Adrenal gland (tissue), 19 donors: ENCODE measurements at regions of chr22 and their contacts with region 1.

Region 1: GRCh38 chr22:21629262-21630149 is at the start of gene YDJC:
- DNase-seq: peak; percentile 81 to 95 (median 92)
- H3K4me3 ChIP-seq: peak within 1 kb of the TSS; percentile 48 to 69 (median 50)
- H3K27ac ChIP-seq: peak within 1 kb of the TSS in 3 of 5 donors; percentile 28 to 81 (median 56)
- H3K4me1 ChIP-seq: peaks cover 6 to 12% of the 10 kb centered on the region in 2 donors
- H3K27me3 ChIP-seq: no peaks in the 10 kb centered on the region
- CTCF ChIP-seq: peak in 5 of 6 experiments; percentile 18 to 92 (median 37)
- POLR2A ChIP-seq: peak; percentile 51
- total RNA-seq, gene YDJC: 8.9 to 33.6 (median 17.4) TPM

Region 2: GRCh38 chr22:21579518-21580147 is 49.9 kb before region 1 on chr22:
- intact Hi-C with region 1: loop called in 1 of 2 experiments (anchors 5 kb)
- DNase-seq: no peak
- H3K4me3 ChIP-seq: no peak overlapping the region
- H3K27ac ChIP-seq: no peak overlapping the region
- H3K4me1 ChIP-seq: peaks cover 0 to 19% of the 10 kb centered on the region in 2 donors
- H3K27me3 ChIP-seq: no peaks in the 10 kb centered on the region
- CTCF ChIP-seq: no peak
- POLR2A ChIP-seq: no peak

Region 3: DNA sequence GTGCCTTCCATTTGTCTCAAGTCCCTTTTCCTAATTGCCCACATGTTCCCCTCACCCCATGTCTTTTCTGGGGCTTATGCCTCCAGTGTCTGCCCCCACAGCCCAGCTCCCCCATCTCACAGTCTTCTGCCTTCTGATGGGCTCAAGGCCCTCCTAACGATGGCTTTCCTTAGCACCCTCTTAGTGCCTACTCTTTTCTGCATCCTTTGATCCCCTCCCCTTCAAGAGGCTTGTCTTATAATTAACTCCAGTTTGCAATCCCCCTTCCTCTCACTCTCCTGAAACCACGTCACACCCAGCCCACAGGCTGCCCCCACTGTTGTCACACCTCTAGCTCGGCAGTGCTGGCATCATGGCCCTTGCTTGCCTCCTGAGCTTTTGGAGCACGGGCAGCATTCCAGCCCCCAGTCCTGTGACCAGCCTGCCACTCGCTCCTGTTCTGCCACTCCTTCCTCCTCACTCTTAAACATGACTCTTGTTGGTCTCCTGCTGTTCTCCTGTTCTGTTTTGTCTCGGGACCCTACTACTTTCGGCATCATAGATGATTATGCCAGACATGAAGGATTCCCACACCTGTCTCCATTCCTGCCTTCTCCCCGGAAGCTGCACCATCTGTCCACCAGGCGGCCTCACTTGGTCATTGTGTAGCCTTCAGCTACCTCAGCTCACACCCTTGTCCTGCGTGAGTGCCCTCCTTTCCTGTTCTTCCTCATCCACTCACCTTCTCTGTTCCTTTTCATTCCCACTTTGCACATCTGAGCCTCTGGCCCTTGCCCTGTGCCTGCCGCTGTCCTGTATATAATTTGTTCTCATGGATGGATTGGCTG is 35.9 kb before region 1 on chr22:
- intact Hi-C with region 1: no loop called
- DNase-seq: no peak
- H3K4me3 ChIP-seq: no peak overlapping the region
- H3K27ac ChIP-seq: no peak overlapping the region
- H3K4me1 ChIP-seq: peaks cover 10 to 26% of the 10 kb centered on the region in 2 donors
- H3K27me3 ChIP-seq: no peaks in the 10 kb centered on the region
- CTCF ChIP-seq: no peak
- POLR2A ChIP-seq: no peak